Activated CD8-positive, alpha-beta memory T cell treated with anti-CD3 and anti-CD28 coated beads, Interleukin-2, amount 10 ng/mL, durations not matched to agents 7 days and 5 days (primary cell): ENCODE measurements at regions of chr12 and their contacts with region 1.

Region 1: GRCh38 chr12:569803-570434 is 93.3 kb downstream of the NINJ2 start:
- DNase-seq: peak; percentile 90
- ATAC-seq: peak; percentile 91
- H3K4me3 Mint-ChIP-seq: peak overlapping the region; percentile 75
- H3K27ac Mint-ChIP-seq: peak overlapping the region; percentile 51
- H3K4me1 Mint-ChIP-seq: peaks cover 49% of the 10 kb centered on the region
- H3K27me3 Mint-ChIP-seq: no peaks in the 10 kb centered on the region

Region 2: DNA sequence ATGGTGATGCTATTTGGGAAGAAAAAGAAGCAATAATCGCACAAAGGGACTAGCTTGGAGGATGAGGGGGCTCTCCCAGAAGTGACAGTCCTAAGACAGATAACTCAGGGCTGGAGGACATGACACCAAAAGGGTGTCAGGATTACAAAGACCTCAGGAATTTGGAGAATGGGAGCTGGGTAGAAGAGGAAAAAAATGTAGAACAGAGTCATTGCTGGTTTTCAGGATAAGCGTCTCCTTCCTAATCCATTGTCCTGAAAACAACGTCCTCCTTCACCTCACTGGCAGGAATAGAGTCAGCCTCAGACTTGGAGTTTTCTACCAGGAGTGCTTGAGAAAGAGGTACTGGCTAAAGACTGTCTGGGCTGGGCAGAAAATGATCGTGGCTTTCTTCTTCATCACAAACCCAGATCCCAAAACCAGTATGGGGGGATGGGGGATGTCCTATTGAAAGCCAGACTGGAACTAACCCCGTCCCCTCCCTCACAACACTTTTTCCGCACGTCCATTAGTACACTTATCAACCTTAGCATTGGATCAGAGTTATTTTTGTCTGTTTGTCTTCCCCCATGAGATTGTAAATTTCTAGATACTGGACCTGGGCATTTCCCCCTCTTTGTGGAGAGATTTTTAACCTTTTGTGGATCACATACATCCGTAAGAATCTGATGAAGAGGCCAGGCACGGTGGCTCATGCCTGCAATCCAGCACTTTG is 95.9 kb before region 1 on chr12:
- CTCF ChIA-PET with region 1: no interaction called
- DNase-seq: no peak
- ATAC-seq: no peak
- H3K4me3 Mint-ChIP-seq: no peak overlapping the region
- H3K27ac Mint-ChIP-seq: no peak overlapping the region
- H3K4me1 Mint-ChIP-seq: peaks cover 12% of the 10 kb centered on the region
- H3K27me3 Mint-ChIP-seq: peaks cover 17% of the 10 kb centered on the region

Region 3: DNA sequence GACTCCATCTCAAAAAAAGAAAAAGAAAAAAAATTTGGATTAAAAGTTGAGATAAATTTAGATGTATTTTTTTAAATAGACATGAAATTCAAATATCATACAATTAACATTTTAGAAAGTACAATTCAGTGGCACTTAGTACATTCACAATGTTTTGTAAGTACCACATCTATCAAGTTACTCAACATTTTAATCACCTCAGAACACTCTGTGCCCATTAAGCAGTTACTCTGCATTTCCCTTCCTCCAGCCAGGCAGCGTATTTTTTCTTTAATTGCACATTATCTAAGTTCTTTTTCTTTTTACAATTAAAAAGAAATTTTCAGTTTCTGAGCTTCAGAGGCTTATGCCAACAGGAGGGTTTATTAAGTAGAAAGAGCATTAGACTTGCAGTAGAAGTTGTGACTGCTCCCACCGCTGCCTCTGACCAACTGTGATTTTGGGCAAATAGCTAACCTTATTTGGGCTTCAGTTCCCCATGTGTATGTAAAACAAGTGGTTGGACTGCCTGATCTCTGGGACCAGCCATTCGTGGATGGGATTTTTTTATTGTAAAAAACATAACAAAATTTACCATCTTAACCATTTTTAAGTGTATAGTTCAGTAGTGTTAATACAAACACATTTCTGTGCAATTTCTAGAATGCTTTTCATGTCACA is 248.2 kb after region 1 on chr12:
- CTCF ChIA-PET with region 1: interaction called, 39 read pairs
- DNase-seq: no peak
- ATAC-seq: no peak
- H3K4me3 Mint-ChIP-seq: no peak overlapping the region
- H3K27ac Mint-ChIP-seq: no peak overlapping the region
- H3K4me1 Mint-ChIP-seq: peaks cover 50% of the 10 kb centered on the region
- H3K27me3 Mint-ChIP-seq: no peaks in the 10 kb centered on the region

Region 4: GRCh38 chr12:949453-950191 is 379.7 kb after region 1 on chr12 and contains the start of gene RAD52:
- CTCF ChIA-PET with region 1: interaction called, 20 read pairs
- DNase-seq: peak; percentile 98
- ATAC-seq: peak; percentile 84
- H3K4me3 Mint-ChIP-seq: peak within 1 kb of the TSS; percentile 98
- H3K27ac Mint-ChIP-seq: peak within 1 kb of the TSS; percentile 87
- H3K4me1 Mint-ChIP-seq: peaks cover 30% of the 10 kb centered on the region
- H3K27me3 Mint-ChIP-seq: no peaks in the 10 kb centered on the region
- total RNA-seq, gene RAD52: 14.6 to 21.8 TPM